Motor neuron (in vitro differentiated cells): ENCODE measurements at regions of chr13 and their contacts with region 1.

Region 1: DNA sequence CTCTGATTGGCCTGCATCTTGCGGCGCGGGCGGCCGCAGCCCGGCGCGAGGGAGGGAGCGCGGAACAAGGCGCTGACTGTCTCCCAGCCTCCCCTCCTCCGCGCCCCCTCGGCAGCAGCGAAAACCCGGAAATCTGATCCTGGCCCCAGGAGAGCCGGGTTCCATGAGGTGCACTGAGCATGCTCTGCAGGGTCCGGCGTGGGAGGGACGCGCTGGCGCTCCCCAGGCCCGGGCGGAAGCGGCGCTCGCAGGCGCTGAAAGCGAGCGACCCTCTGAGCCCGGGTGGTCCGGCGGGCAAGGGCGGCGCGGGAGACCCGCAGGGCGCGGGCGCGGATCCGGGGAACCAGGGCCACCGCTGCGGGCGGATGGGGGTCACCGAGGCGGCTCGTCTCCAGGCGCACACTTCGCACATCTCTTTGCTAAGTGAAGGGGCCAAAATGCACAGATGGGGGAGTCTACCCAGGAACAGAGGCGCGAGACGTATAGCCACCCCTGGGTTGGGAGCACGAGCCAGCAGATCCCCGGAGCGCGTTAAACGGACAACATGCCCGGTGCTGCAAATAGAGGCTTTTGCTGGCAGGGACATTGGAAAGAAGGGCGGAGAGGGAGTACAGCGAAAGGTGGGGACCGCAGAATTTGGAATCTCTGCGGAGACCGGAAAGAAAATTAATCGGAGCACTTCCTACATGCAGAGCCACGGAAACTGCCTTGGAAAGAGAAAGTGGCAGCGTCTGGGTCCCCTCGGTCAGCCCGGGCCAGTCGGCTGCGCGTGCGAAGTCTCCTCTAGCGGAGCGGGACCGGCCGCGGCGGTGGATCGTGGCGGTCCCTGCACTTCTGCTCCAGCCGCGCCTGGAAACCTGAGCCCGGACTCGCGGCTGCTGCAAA is 510 bp upstream of the PCDH9 start:
- ATAC-seq: peak; percentile 84 to 94 (median 94)
- H3K4me3 ChIP-seq: peak overlapping the region; percentile 49 to 81 (median 58)
- H3K27ac ChIP-seq: peak overlapping the region; percentile 44 to 67
- H3K4me1 ChIP-seq: peaks cover 0 to 9% of the 10 kb centered on the region in 2 donors

Region 2: DNA sequence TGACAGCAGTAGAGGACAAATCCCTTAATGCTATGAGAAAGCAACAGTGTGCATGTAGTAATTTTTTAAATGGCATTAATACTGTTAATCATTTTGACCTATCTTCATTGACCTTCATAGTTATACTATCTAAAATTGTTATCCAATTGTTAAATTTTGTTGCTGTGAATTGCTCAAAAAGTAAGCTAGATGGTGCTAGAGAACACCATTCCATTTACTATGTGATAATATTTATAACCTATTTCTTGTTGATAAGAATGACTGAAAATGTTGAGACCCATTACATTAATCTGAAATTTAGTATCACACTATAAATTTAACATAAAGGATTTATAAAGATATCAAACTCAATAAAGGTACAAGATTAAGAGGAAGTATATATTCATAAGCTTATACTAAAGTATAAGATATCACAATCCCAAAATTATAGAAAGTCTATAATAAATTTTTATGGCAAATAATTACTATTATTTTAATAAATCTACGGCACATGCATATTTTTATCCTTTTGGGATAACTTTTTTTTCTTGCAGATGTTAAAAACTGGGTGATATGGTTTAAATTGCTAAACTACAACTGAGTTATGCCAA is 1573.8 kb before region 1 on chr13:
- in situ Hi-C with region 1: loop called in 1 of 9 experiments (anchors 25 kb)
- ATAC-seq: no peak
- H3K4me3 ChIP-seq: no peak overlapping the region
- H3K27ac ChIP-seq: no peak overlapping the region
- H3K4me1 ChIP-seq: peaks cover 3 to 7% of the 10 kb centered on the region in 2 donors

Region 3: GRCh38 chr13:67664502-67664901 is 433.9 kb after region 1 on chr13:
- in situ Hi-C with region 1: no loop called
- ATAC-seq: peak in 5 of 8 experiments; percentile 45 to 94 (median 53)
- H3K4me3 ChIP-seq: no peak overlapping the region
- H3K27ac ChIP-seq: no peak overlapping the region
- H3K4me1 ChIP-seq: peaks cover 3 to 18% of the 10 kb centered on the region in 2 donors

Region 4: GRCh38 chr13:68697551-68697950 is 1466.9 kb after region 1 on chr13:
- in situ Hi-C with region 1: no loop called
- ATAC-seq: peak in 5 of 8 experiments; percentile 59 to 68 (median 65)
- H3K4me3 ChIP-seq: no peak overlapping the region
- H3K27ac ChIP-seq: no peak overlapping the region
- H3K4me1 ChIP-seq: peaks cover 0 to 22% of the 10 kb centered on the region in 2 donors